ENCODE measurements at regions of chr17 and their contacts with region 1.

Region 1: DNA sequence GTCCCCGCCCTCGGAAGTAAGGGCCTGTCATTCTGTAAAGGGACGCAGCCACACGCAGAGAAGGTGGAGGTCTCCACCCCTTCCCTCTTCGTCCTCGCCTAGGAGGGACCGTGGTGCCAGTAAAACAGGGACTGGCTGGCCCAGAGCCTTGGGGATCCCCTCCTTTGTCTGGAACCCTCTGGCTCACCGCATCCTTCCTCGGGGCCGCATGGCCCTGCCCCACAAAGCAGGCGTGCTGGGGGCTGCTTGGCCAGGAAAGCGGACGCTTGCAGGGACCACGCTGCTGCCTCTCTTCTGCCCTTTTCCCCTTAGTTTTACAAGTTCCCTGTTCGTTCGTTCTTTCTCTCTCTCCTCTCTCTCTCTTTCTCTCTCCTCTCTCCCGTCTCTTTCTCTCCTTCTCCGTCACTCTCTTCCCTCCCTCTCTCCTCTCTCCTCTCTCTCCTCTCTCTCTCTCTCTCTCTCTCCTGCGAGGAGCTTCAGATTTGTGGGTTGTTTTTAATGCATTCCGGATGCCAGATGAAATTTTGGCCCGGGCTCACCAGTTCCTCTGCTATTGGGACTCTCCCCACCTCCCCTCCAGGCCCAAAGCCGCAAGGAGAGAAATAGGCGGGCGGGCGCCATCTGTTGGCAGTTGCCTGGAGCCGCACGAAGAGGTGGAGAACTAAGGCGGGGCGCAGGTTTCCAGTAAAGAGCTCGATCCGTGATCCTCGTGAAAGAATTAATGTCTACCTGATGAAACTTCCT is 35.1 kb upstream of the CDRT4 start:
- DNase-seq: peak; percentile 83
- H3K4me3 ChIP-seq: no peak overlapping the region
- H3K27ac ChIP-seq: peak overlapping the region; percentile 61
- H3K27me3 ChIP-seq: no peaks in the 10 kb centered on the region
- CTCF ChIP-seq: peak; percentile 92

Region 2: GRCh38 chr17:15233022-15233805 is 269.3 kb before region 1 on chr17:
- CTCF ChIA-PET with region 1: interaction called, 30 read pairs
- POLR2A ChIA-PET with region 1: interaction called, 3 read pairs
- DNase-seq: no peak
- H3K4me3 ChIP-seq: no peak overlapping the region
- H3K27ac ChIP-seq: no peak overlapping the region
- H3K27me3 ChIP-seq: no peaks in the 10 kb centered on the region
- CTCF ChIP-seq: peak; percentile 46

Region 3: GRCh38 chr17:15262291-15263205 is 240.0 kb before region 1 on chr17:
- CTCF ChIA-PET with region 1: interaction called, 116 read pairs
- POLR2A ChIA-PET with region 1: interaction called, 13 read pairs
- DNase-seq: peak; percentile 73
- H3K4me3 ChIP-seq: peak overlapping the region; percentile 88
- H3K27ac ChIP-seq: peak overlapping the region; percentile 93
- H3K27me3 ChIP-seq: peaks cover 7% of the 10 kb centered on the region
- CTCF ChIP-seq: peak; percentile 43

Region 4: GRCh38 chr17:15289285-15290185 is 213.0 kb before region 1 on chr17:
- CTCF ChIA-PET with region 1: no interaction called
- POLR2A ChIA-PET with region 1: no interaction called
- DNase-seq: no peak
- H3K4me3 ChIP-seq: no peak overlapping the region
- H3K27ac ChIP-seq: peak overlapping the region; percentile 33
- H3K27me3 ChIP-seq: no peaks in the 10 kb centered on the region
- CTCF ChIP-seq: no peak

Region 5: GRCh38 chr17:15409721-15410250 is 92.8 kb before region 1 on chr17:
- CTCF ChIA-PET with region 1: interaction called, 14 read pairs
- POLR2A ChIA-PET with region 1: no interaction called
- DNase-seq: peak; percentile 93
- H3K4me3 ChIP-seq: peak overlapping the region; percentile 37
- H3K27ac ChIP-seq: peak overlapping the region; percentile 96
- H3K27me3 ChIP-seq: no peaks in the 10 kb centered on the region
- CTCF ChIP-seq: no peak

Region 6: DNA sequence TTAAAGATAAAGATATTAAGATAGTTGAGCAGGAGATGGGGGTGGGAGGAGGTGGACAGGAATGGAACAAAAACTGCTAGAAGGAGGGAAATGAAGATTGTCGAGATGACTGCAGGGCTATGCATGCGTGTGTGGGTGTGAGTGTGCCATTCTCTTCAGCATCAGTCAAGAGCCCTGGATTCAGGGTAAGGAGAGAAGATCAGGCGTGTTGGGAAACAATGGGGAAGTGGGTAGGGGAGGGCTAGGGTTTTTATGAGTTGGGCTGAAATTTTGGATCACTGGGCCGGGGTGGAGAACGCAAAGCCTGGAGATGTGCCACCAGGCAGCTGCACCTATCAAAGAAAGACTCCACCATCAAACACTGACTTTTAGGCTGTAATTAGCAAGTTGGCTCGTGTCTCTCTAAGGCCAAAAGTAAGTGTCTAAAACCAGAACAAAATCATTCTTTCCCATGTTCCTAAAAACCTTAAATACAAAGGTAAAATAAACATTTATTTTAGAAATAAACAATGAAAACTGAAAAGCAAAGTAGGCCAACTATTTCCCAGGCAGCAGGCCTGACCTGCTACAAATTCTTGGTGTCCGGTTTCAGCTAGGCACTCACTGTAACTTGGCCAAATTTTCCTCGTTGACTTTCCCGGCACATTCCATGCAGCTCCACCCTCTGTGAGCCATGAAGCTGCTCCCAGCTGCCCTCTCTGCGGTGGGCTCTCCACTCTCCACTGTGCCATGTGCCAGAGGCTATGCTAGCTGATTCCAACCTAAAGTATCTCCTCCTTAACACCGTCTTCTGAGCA is 39.4 kb before region 1 on chr17:
- CTCF ChIA-PET with region 1: interaction called, 11 read pairs
- POLR2A ChIA-PET with region 1: no interaction called
- DNase-seq: peak; percentile 87
- H3K4me3 ChIP-seq: no peak overlapping the region
- H3K27ac ChIP-seq: peak overlapping the region; percentile 89
- H3K27me3 ChIP-seq: no peaks in the 10 kb centered on the region
- CTCF ChIP-seq: no peak

Region 7: GRCh38 chr17:15490634-15491261 is 11.8 kb before region 1 on chr17:
- CTCF ChIA-PET with region 1: interaction called, 28 read pairs
- POLR2A ChIA-PET with region 1: interaction called, 3 read pairs
- DNase-seq: no peak
- H3K4me3 ChIP-seq: no peak overlapping the region
- H3K27ac ChIP-seq: peak overlapping the region; percentile 68
- H3K27me3 ChIP-seq: no peaks in the 10 kb centered on the region
- CTCF ChIP-seq: no peak

Region 8: GRCh38 chr17:15651583-15652110 is 149.1 kb after region 1 on chr17:
- CTCF ChIA-PET with region 1: no interaction called
- POLR2A ChIA-PET with region 1: no interaction called
- DNase-seq: peak; percentile 95
- H3K4me3 ChIP-seq: peak overlapping the region; percentile 76
- H3K27ac ChIP-seq: peak overlapping the region; percentile 84
- H3K27me3 ChIP-seq: no peaks in the 10 kb centered on the region
- CTCF ChIP-seq: no peak

Measured in AG04450 (cell line).